ENCODE measurements at regions of chr9 and their contacts with region 1.

Region 1: GRCh38 chr9:34072868-34073590 is 24.3 kb upstream of the UBAP2 start:
- DNase-seq: no peak
- H3K4me3 Mint-ChIP-seq: no peak overlapping the region
- H3K27ac Mint-ChIP-seq: no peak overlapping the region
- H3K4me1 Mint-ChIP-seq: peaks cover 11% of the 10 kb centered on the region
- H3K27me3 Mint-ChIP-seq: peaks cover 2% of the 10 kb centered on the region

Region 2: DNA sequence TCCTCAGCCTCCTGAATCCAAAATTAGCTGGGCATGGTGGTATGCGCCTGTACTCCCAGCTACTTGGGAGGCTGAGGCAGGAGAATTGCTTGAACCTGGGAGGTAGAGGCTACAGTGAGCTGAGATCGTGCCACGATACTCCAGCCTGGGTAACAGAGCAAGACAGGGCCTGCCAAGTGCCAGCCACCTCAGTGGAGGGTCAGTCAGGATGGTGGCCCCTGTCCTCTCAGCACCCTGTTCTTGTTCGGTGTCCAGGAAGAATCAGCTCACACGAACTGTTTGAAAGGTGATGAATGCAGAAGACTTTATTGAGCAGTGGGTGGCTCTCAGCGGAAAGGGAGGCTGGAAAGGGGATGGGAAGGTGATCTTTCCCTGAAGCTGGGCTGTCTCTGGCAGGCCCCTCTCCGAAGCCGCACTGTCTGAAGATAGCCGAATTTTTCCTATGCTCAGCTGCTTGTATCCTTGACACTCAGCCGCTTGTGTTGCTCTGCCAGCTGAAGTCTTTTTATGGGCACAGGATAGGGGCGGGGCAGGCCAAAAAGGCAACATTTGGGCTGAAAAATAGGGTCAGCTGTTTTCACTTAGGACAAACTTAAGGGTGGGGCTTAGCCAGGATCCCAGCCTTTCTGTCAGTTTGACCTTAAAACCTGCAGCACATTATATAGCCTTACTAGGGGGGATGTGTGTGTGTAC is 205.1 kb before region 1 on chr9:
- CTCF ChIA-PET with region 1: no interaction called
- POLR2A ChIA-PET with region 1: no interaction called
- DNase-seq: no peak
- H3K4me3 Mint-ChIP-seq: no peak overlapping the region
- H3K27ac Mint-ChIP-seq: no peak overlapping the region
- H3K4me1 Mint-ChIP-seq: peaks cover 3% of the 10 kb centered on the region
- H3K27me3 Mint-ChIP-seq: no peaks in the 10 kb centered on the region

Region 3: DNA sequence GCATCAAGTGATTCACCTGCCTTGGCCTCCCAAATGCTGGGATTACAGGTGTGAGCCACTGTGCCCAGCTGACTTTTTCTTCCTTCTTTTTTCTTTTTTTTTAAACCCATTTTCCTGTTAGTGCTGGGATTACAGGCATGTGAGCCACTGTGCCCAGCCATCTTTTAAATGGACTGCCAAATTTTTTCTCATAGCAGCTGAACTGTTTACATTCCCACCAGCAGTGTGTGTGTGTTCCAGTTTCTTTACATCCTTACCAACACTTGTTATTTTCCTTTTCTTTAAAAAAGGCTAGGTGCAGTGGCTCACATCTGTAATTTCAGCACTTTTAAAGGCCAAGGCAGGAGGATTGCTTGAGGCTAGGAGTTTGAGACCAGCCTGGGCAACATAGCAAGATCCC is 179.2 kb before region 1 on chr9:
- CTCF ChIA-PET with region 1: no interaction called
- POLR2A ChIA-PET with region 1: no interaction called
- DNase-seq: no peak
- H3K4me3 Mint-ChIP-seq: no peak overlapping the region
- H3K27ac Mint-ChIP-seq: no peak overlapping the region
- H3K4me1 Mint-ChIP-seq: no peaks in the 10 kb centered on the region
- H3K27me3 Mint-ChIP-seq: no peaks in the 10 kb centered on the region

Region 4: GRCh38 chr9:33924978-33925797 is 147.8 kb before region 1 on chr9:
- CTCF ChIA-PET with region 1: interaction called, 20 read pairs
- POLR2A ChIA-PET with region 1: no interaction called
- DNase-seq: peak; percentile 28
- H3K4me3 Mint-ChIP-seq: no peak overlapping the region
- H3K27ac Mint-ChIP-seq: no peak overlapping the region
- H3K4me1 Mint-ChIP-seq: no peaks in the 10 kb centered on the region
- H3K27me3 Mint-ChIP-seq: no peaks in the 10 kb centered on the region

Region 5: DNA sequence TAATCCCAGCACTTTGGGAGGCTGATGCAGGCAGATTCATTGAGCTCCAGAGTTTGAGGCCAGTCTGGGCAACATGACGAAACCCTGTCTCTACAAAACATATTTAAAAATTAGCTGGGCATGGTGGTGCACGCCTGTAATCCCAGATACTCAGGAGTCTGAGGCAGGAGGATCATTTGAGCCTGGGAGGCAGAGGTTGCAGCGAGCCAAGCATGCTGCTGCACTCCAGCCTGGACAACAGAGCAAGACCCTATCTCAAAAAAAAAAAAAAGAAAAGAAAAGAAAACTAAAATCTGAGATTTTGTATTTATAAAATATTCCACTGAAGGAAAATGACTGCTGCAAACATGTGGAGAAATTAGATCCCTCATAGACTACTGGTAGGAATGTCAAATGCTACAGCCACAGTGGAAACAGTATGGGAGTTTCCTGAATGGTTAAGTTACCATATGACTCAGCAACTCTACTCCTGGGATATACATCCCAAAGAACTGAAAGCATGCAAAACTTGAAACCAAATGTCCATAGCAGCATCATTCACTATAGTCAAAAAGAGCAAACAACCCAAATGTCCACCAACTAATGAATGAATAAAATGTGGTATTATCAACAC is 130.5 kb before region 1 on chr9:
- CTCF ChIA-PET with region 1: interaction called, 15 read pairs
- POLR2A ChIA-PET with region 1: no interaction called
- DNase-seq: no peak
- H3K4me3 Mint-ChIP-seq: no peak overlapping the region
- H3K27ac Mint-ChIP-seq: no peak overlapping the region
- H3K4me1 Mint-ChIP-seq: no peaks in the 10 kb centered on the region
- H3K27me3 Mint-ChIP-seq: no peaks in the 10 kb centered on the region

Region 6: DNA sequence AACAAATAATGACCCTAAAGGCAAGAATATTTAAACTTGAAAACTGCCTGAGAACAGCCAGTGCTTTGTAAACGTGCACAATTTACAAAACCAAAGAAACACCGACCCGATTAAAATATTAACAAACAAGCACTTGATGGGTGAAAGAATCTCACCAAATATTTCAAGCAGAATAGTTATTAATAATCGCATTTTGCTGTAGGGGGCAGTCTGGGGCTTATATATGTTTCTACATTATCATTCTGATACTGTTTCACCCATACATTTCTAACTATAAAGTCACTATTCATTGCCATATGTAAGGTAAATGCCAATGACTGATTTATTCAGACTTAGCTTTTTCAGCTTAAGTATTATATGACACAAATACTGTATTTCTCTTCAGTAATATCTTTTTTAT is 62.0 kb before region 1 on chr9:
- CTCF ChIA-PET with region 1: interaction called, 13 read pairs
- POLR2A ChIA-PET with region 1: no interaction called
- DNase-seq: no peak
- H3K4me3 Mint-ChIP-seq: no peak overlapping the region
- H3K27ac Mint-ChIP-seq: no peak overlapping the region
- H3K4me1 Mint-ChIP-seq: peaks cover 2% of the 10 kb centered on the region
- H3K27me3 Mint-ChIP-seq: no peaks in the 10 kb centered on the region

Region 7: GRCh38 chr9:34048923-34049697 is 23.9 kb before region 1 on chr9:
- CTCF ChIA-PET with region 1: interaction called, 11 read pairs
- POLR2A ChIA-PET with region 1: interaction called, 16 read pairs
- DNase-seq: peak; percentile 97
- H3K4me3 Mint-ChIP-seq: peak overlapping the region; percentile 89
- H3K27ac Mint-ChIP-seq: peak overlapping the region; percentile 97
- H3K4me1 Mint-ChIP-seq: peaks cover 58% of the 10 kb centered on the region
- H3K27me3 Mint-ChIP-seq: no peaks in the 10 kb centered on the region

Region 8: GRCh38 chr9:34084562-34084961 is 11.5 kb after region 1 on chr9:
- CTCF ChIA-PET with region 1: interaction called, 13 read pairs
- POLR2A ChIA-PET with region 1: no interaction called
- DNase-seq: no peak
- H3K4me3 Mint-ChIP-seq: no peak overlapping the region
- H3K27ac Mint-ChIP-seq: no peak overlapping the region
- H3K4me1 Mint-ChIP-seq: no peaks in the 10 kb centered on the region
- H3K27me3 Mint-ChIP-seq: no peaks in the 10 kb centered on the region